Natural killer cell (primary cell): ENCODE measurements at regions of chr11 and their contacts with region 1.

Region 1: GRCh38 chr11:126310228-126310991 is 6.5 kb downstream of the DCPS start:
- DNase-seq: peak; percentile 67 to 75
- ATAC-seq: peak; percentile 71 to 78 (median 75)
- H3K4me3 ChIP-seq: no peak overlapping the region
- H3K4me3 Mint-ChIP-seq: peak overlapping the region; percentile 79
- H3K27ac ChIP-seq: peak overlapping the region; percentile 7
- H3K27ac Mint-ChIP-seq: peak overlapping the region; percentile 92 to 93
- H3K4me1 ChIP-seq: peaks cover 36% of the 10 kb centered on the region
- H3K4me1 Mint-ChIP-seq: peaks cover 53 to 54% of the 10 kb centered on the region in 2 donors
- H3K27me3 ChIP-seq: no peaks in the 10 kb centered on the region
- H3K27me3 Mint-ChIP-seq: no peaks in the 10 kb centered on the region
- CTCF ChIP-seq: peak; percentile 94

Region 2: DNA sequence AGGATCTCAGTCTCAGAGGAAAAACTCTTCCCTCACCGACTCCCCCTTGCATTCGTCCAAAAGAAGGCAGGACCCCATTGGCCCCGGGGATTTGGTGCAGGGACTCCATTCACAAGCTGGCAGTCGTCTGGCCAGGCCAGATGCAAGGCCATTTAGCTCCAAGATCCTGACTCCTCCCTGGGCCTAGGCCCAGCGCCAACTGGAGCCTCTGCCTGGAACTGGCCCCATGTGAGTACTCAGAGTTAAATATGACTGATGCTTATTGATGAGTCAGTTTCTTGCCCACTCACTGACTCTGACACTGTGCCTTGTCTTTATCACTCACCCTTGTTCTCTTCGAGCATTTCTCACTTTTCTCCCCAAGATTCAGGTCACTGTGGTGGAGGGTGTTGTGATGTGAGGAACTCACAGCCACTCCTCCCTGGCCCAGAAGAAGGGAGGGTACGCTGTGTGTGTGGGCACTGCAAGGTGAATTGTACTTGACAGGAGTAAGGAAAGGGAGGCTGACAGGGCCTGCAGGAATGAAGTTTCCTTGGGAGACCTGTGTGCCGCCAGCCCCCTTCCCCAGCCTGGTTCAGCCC is 21.8 kb after region 1 on chr11:
- intact Hi-C with region 1: loop called (anchors 1 kb)
- DNase-seq: peak; percentile 65
- ATAC-seq: peak; percentile 69 to 90 (median 80)
- H3K4me3 ChIP-seq: no peak overlapping the region
- H3K4me3 Mint-ChIP-seq: peak overlapping the region; percentile 80
- H3K27ac ChIP-seq: peak overlapping the region; percentile 85
- H3K27ac Mint-ChIP-seq: peak overlapping the region; percentile 88 to 97
- H3K4me1 ChIP-seq: peaks cover 90% of the 10 kb centered on the region
- H3K4me1 Mint-ChIP-seq: peaks cover 84 to 85% of the 10 kb centered on the region in 2 donors
- H3K27me3 ChIP-seq: no peaks in the 10 kb centered on the region
- H3K27me3 Mint-ChIP-seq: no peaks in the 10 kb centered on the region
- CTCF ChIP-seq: no peak

Region 3: DNA sequence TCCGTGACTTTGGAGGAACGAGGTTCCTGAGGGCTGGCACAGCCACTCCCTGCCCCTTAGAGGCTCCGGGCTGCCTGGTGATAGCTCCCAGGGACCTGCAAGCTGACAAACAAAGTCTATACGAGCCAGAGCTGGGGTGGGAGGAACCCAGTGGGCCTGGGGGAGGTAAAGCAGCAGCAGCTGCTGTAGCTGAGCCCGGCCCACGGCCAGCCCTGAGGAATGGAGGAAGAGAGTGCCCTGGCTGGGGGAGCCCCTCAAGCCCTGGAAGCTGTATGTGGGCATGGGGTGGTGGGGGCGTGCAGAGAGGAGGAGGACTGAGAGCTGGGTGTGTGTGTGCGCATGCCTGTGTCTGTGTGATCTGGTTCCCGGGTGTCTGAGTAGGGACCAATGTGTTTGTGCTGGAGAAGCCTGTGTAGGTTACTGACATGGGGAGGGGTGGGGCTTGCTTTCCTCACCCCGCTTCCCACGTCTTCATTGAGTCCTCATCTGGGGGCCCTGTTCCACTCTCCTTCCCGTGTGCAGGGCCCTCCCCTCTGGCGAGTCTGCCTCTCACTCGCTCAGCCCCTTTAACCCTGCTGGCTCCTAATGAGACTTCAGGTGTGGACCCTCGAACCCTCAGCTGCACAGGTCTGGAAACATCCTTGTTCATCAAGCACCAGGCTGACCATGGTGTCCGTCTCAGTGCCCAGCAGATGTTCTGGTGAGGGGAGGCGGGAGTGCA is 55.8 kb after region 1 on chr11:
- intact Hi-C with region 1: loop called (anchors 2 kb)
- DNase-seq: no peak
- ATAC-seq: peak in 1 of 3 donors; percentile 6
- H3K4me3 ChIP-seq: no peak overlapping the region
- H3K4me3 Mint-ChIP-seq: peak overlapping the region; percentile 65
- H3K27ac ChIP-seq: no peak overlapping the region
- H3K27ac Mint-ChIP-seq: peak overlapping the region; percentile 64 to 82
- H3K4me1 ChIP-seq: peaks cover 27% of the 10 kb centered on the region
- H3K4me1 Mint-ChIP-seq: peaks cover 31 to 52% of the 10 kb centered on the region in 2 donors
- H3K27me3 ChIP-seq: no peaks in the 10 kb centered on the region
- H3K27me3 Mint-ChIP-seq: no peaks in the 10 kb centered on the region
- CTCF ChIP-seq: no peak

Region 4: DNA sequence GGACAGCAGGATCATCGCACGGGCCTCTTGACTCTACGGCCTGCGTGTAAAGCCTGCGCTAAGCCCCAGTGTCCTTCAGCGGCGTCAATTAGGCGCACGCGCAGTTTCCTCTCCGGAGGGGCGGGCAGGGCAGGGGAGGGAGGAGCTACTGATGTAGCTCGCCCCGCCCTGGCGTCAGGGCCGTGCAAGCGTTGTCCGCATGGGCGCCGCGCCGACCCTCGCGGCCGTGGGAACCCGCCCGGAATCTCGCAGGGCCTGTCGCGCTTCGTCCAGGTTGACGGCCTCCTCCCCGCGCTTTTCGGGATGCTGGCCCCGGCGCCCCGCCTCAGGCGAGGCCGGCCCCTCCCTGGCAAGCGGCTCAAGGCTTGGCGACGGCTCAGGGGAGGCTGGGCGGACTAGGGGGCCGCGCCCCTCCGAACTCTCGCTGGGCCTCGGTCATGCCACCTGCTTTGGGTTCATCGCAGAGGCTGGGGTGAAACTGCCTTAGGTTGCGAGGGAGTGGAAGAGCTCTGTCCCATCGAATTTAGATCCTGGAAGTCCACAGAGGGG is 106.2 kb after region 1 on chr11:
- intact Hi-C with region 1: loop called (anchors 2 kb)
- DNase-seq: peak; percentile 65 to 81
- ATAC-seq: peak; percentile 93 to 100 (median 99)
- H3K4me3 ChIP-seq: no peak overlapping the region
- H3K4me3 Mint-ChIP-seq: peak overlapping the region; percentile 65
- H3K27ac ChIP-seq: no peak overlapping the region
- H3K27ac Mint-ChIP-seq: peak overlapping the region; percentile 26 to 70
- H3K4me1 ChIP-seq: peaks cover 12% of the 10 kb centered on the region
- H3K4me1 Mint-ChIP-seq: peaks cover 9 to 30% of the 10 kb centered on the region in 2 donors
- H3K27me3 ChIP-seq: no peaks in the 10 kb centered on the region
- H3K27me3 Mint-ChIP-seq: no peaks in the 10 kb centered on the region
- CTCF ChIP-seq: no peak